PC-3 (cell line): ENCODE measurements at regions of chr6 and their contacts with region 1.

Region 1: GRCh38 chr6:116969211-116969863 is 92.3 kb downstream of the RFX6 start:
- DNase-seq: peak; percentile 64
- ATAC-seq: peak; percentile 33; the same call in 1 of the 2 replicates
- H3K4me3 ChIP-seq: no peak overlapping the region
- H3K27ac ChIP-seq: no peak overlapping the region
- H3K4me1 ChIP-seq: peaks cover 25% of the 10 kb centered on the region
- H3K27me3 ChIP-seq: no peaks in the 10 kb centered on the region
- CTCF ChIP-seq: peak; percentile 74

Region 2: DNA sequence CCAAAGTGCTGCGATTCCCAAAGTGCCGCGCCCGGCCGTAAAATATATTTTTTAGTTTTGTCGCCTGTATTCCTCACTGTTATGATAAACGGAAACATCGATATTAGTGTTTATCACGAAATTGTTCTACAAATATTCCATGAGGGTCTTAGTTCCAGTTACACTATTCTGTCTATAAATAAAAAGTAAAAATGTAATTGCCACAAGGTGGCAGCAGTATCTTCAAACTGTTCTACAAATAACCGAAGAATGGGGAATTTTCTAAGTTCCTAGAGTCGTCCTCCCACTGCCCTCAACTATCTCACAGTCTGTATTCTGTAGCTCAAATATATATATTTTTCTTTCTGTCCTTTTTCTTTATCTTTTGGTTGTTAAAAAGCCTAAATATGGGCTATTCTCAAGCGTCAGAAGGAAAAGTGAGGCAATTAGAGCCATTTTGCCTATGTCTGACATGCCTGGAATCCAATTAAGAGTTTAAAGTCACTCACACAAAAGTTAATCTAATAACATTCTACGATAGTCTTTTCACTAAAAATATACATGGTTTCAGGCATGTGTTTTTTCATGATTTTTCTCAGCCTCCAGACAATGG is 189.7 kb before region 1 on chr6:
- CTCF ChIA-PET with region 1: no interaction called
- POLR2A ChIA-PET with region 1: no interaction called
- intact Hi-C with region 1: loop called (anchors 1 kb)
- DNase-seq: peak; percentile 67
- ATAC-seq: peak; percentile 43; the same call in 1 of the 2 replicates
- H3K4me3 ChIP-seq: no peak overlapping the region
- H3K27ac ChIP-seq: no peak overlapping the region
- H3K4me1 ChIP-seq: no peaks in the 10 kb centered on the region
- H3K27me3 ChIP-seq: no peaks in the 10 kb centered on the region
- CTCF ChIP-seq: peak; percentile 61

Region 3: DNA sequence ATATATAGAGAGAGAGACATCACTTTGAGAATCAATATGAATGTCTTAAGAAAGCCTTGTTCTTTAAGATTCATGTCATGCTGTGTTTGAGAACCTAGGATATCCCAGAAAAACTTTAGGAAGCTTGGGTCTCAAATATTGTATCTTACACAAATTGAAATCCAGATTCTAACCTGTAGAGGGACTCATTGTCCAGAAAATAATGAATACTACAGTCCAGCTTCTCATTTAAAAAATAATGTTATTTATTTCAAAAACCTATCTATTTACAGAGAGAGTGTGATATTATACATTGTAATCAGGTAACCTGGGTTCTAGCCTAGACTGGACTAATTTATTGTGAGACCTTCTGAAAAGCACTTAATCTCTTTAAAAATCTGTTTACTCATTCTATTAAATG is 88.1 kb before region 1 on chr6:
- CTCF ChIA-PET with region 1: interaction called, 6 read pairs
- POLR2A ChIA-PET with region 1: interaction called, 9 read pairs
- intact Hi-C with region 1: loop called (anchors 1 kb)
- DNase-seq: peak; percentile 53
- ATAC-seq: peak; percentile 37; the same call in 1 of the 2 replicates
- H3K4me3 ChIP-seq: no peak overlapping the region
- H3K27ac ChIP-seq: no peak overlapping the region
- H3K4me1 ChIP-seq: peaks cover 20% of the 10 kb centered on the region
- H3K27me3 ChIP-seq: peaks cover 13% of the 10 kb centered on the region
- CTCF ChIP-seq: peak; percentile 65

Region 4: GRCh38 chr6:116933485-116933884 is 35.9 kb before region 1 on chr6:
- CTCF ChIA-PET with region 1: no interaction called
- POLR2A ChIA-PET with region 1: no interaction called
- intact Hi-C with region 1: loop called (anchors 5 kb)
- DNase-seq: peak; percentile 46
- ATAC-seq: peak; percentile 6
- H3K4me3 ChIP-seq: no peak overlapping the region
- H3K27ac ChIP-seq: peak overlapping the region; percentile 97
- H3K4me1 ChIP-seq: peaks cover 36% of the 10 kb centered on the region
- H3K27me3 ChIP-seq: no peaks in the 10 kb centered on the region
- CTCF ChIP-seq: no peak

Region 5: GRCh38 chr6:116941727-116942126 is 27.6 kb before region 1 on chr6:
- CTCF ChIA-PET with region 1: no interaction called
- POLR2A ChIA-PET with region 1: no interaction called
- intact Hi-C with region 1: loop called (anchors 2 kb)
- DNase-seq: peak; percentile 34
- ATAC-seq: peak; percentile 53; the same call in 1 of the 2 replicates
- H3K4me3 ChIP-seq: no peak overlapping the region
- H3K27ac ChIP-seq: no peak overlapping the region
- H3K4me1 ChIP-seq: peaks cover 20% of the 10 kb centered on the region
- H3K27me3 ChIP-seq: no peaks in the 10 kb centered on the region
- CTCF ChIP-seq: peak; percentile 59

Region 6: GRCh38 chr6:117188627-117189201 is 219.4 kb after region 1 on chr6:
- CTCF ChIA-PET with region 1: no interaction called
- POLR2A ChIA-PET with region 1: no interaction called
- intact Hi-C with region 1: loop called (anchors 1 kb)
- DNase-seq: peak; percentile 28
- ATAC-seq: peak; percentile 24; the same call in 1 of the 2 replicates
- H3K4me3 ChIP-seq: no peak overlapping the region
- H3K27ac ChIP-seq: no peak overlapping the region
- H3K4me1 ChIP-seq: no peaks in the 10 kb centered on the region
- H3K27me3 ChIP-seq: no peaks in the 10 kb centered on the region
- CTCF ChIP-seq: peak; percentile 73

Region 7: GRCh38 chr6:117317261-117317660 is 347.9 kb after region 1 on chr6:
- CTCF ChIA-PET with region 1: no interaction called
- POLR2A ChIA-PET with region 1: no interaction called
- intact Hi-C with region 1: loop called (anchors 1 kb)
- DNase-seq: peak; percentile 59
- ATAC-seq: peak; percentile 63
- H3K4me3 ChIP-seq: no peak overlapping the region
- H3K27ac ChIP-seq: no peak overlapping the region
- H3K4me1 ChIP-seq: no peaks in the 10 kb centered on the region
- H3K27me3 ChIP-seq: no peaks in the 10 kb centered on the region
- CTCF ChIP-seq: peak; percentile 79